Naive thymus-derived CD4-positive, alpha-beta T cell (primary cell): ENCODE measurements at regions of chr10 and their contacts with region 1.

Region 1: GRCh38 chr10:27285108-27285507 is 44.5 kb upstream of the ACBD5 start:
- DNase-seq: peak in 7 of 9 donors; percentile 17 to 54 (median 28)
- ATAC-seq: peak; percentile 73
- H3K4me3 ChIP-seq: no peak overlapping the region
- H3K4me3 Mint-ChIP-seq: no peak overlapping the region
- H3K27ac ChIP-seq: no peak overlapping the region
- H3K27ac Mint-ChIP-seq: no peak overlapping the region
- H3K4me1 ChIP-seq: no peaks in the 10 kb centered on the region
- H3K4me1 Mint-ChIP-seq: peaks cover 0 to 6% (median 0%) of the 10 kb centered on the region in 7 donors
- H3K27me3 ChIP-seq: no peaks in the 10 kb centered on the region
- H3K27me3 Mint-ChIP-seq: peaks cover 0 to 10% (median 0%) of the 10 kb centered on the region in 5 donors

Region 2: GRCh38 chr10:27252267-27253000 is 32.7 kb before region 1 on chr10:
- CTCF ChIA-PET with region 1: interaction called, 3 read pairs
- POLR2A ChIA-PET with region 1: no interaction called
- intact Hi-C with region 1: loop called in 1 of 2 experiments (anchors 1 kb)
- DNase-seq: peak; percentile 66 to 87 (median 80)
- ATAC-seq: peak; percentile 97
- H3K4me3 ChIP-seq: peak overlapping the region; percentile 51
- H3K4me3 Mint-ChIP-seq: peak overlapping the region; percentile 69 to 88 (median 80)
- H3K27ac ChIP-seq: peak overlapping the region; percentile 79
- H3K27ac Mint-ChIP-seq: peak overlapping the region; percentile 40 to 88 (median 81)
- H3K4me1 ChIP-seq: peaks cover 0 to under 1% of the 10 kb centered on the region in 2 donors
- H3K4me1 Mint-ChIP-seq: peaks cover 8 to 15% (median 13%) of the 10 kb centered on the region in 7 donors
- H3K27me3 ChIP-seq: no peaks in the 10 kb centered on the region
- H3K27me3 Mint-ChIP-seq: peaks cover 0 to 5% (median 5%) of the 10 kb centered on the region in 5 donors

Region 3: DNA sequence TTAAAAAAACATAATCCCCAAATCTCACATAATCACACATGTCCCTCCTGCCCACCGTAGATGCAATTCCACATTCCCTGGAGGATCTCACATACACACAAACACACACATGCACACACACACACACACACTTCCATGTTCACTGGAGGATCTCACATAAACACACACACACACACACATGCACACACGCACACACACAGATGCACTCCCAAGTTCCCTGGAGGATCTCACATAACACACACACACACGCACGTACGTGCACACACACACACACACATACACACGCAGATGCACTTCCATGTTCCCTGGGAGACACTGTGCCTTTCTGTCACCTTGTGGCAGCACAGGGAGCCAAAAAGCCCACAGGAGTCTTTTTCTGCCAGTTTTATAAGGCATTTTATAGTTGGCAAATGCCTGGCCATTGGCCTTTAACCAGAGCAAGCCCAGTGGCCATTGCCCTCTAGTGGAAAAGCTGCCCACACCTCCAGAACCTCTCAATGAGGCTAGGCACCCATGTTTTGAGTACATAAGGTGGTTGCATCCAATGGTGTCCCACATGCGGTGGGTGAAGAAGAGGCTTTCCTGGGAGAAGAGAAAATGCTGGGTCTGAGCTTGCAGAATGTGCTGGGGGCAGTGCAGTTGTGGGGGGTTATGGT is 70.9 kb after region 1 on chr10:
- CTCF ChIA-PET with region 1: no interaction called
- POLR2A ChIA-PET with region 1: no interaction called
- intact Hi-C with region 1: no loop called
- DNase-seq: no peak
- ATAC-seq: no peak
- H3K4me3 ChIP-seq: no peak overlapping the region
- H3K4me3 Mint-ChIP-seq: no peak overlapping the region
- H3K27ac ChIP-seq: no peak overlapping the region
- H3K27ac Mint-ChIP-seq: peak overlapping the region in 1 of 9 donors; percentile 10
- H3K4me1 ChIP-seq: no peaks in the 10 kb centered on the region
- H3K4me1 Mint-ChIP-seq: peaks cover 0 to 14% (median 9%) of the 10 kb centered on the region in 7 donors
- H3K27me3 ChIP-seq: no peaks in the 10 kb centered on the region
- H3K27me3 Mint-ChIP-seq: peaks cover 0 to 21% (median 6%) of the 10 kb centered on the region in 5 donors